A673 (cell line): ENCODE measurements at regions of chr3 and their contacts with region 1.

Region 1: GRCh38 chr3:101827211-101828174 is 21.8 kb upstream of the NFKBIZ start:
- DNase-seq: peak; percentile 73
- H3K4me3 ChIP-seq: peak overlapping the region; percentile 60
- H3K27ac ChIP-seq: peak overlapping the region; percentile 83
- H3K4me1 ChIP-seq: peaks cover 30% of the 10 kb centered on the region
- H3K27me3 ChIP-seq: no peaks in the 10 kb centered on the region
- CTCF ChIP-seq: no peak

Region 2: DNA sequence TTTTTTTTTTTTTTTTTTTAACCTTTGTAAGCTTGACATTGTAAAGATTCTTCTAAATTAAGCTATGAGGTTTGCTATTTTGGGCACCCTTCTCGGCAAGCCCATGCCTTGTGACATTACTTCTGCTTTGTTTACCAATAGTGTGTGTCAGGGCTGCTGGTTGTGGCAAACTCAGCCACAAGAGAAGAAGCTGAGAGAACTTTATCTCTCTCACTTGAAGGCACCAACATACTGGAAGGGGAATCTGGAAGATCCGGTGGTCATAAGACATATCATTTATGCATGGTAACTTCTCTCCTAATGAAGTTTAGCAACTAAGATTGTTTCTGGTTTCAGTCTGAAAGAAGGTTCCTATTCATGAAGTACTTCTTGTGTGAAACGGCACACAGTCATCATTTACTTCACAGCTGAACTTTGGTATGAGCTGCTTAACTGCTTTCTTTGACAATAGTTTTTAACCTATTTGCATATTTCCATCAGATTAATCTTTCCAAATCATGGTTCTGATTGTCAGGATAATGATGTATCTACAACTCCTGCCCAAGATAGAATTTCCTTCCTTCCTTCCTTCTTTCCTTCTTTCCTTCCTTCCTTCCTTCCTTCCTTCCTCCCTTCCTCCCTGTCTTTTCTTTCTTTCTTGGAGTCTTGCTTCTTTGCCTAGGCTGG is 211.1 kb after region 1 on chr3:
- CTCF ChIA-PET with region 1: no interaction called
- POLR2A ChIA-PET with region 1: no interaction called
- intact Hi-C with region 1: loop called (anchors 5 kb)
- DNase-seq: peak; percentile 82
- H3K4me3 ChIP-seq: no peak overlapping the region
- H3K27ac ChIP-seq: peak overlapping the region; percentile 76
- H3K4me1 ChIP-seq: peaks cover 17% of the 10 kb centered on the region
- H3K27me3 ChIP-seq: no peaks in the 10 kb centered on the region
- CTCF ChIP-seq: no peak